ENCODE measurements at regions of chr4 and their contacts with region 1.

Region 1: GRCh38 chr4:155403886-155404285 is 27.1 kb upstream of the MAP9 start:
- DNase-seq: no peak
- ATAC-seq: peak in 1 of 2 donors; percentile 45

Region 2: GRCh38 chr4:155787113-155787710 is 383.3 kb after region 1 on chr4:
- intact Hi-C with region 1: loop called in 1 of 2 experiments (anchors 2 kb)
- DNase-seq: no peak
- ATAC-seq: peak; percentile 90 to 91

Region 3: GRCh38 chr4:155946486-155946885 is 542.6 kb after region 1 on chr4:
- intact Hi-C with region 1: loop called (anchors 5 to 10 kb)
- DNase-seq: no peak
- ATAC-seq: peak; percentile 57 to 77

Region 4: DNA sequence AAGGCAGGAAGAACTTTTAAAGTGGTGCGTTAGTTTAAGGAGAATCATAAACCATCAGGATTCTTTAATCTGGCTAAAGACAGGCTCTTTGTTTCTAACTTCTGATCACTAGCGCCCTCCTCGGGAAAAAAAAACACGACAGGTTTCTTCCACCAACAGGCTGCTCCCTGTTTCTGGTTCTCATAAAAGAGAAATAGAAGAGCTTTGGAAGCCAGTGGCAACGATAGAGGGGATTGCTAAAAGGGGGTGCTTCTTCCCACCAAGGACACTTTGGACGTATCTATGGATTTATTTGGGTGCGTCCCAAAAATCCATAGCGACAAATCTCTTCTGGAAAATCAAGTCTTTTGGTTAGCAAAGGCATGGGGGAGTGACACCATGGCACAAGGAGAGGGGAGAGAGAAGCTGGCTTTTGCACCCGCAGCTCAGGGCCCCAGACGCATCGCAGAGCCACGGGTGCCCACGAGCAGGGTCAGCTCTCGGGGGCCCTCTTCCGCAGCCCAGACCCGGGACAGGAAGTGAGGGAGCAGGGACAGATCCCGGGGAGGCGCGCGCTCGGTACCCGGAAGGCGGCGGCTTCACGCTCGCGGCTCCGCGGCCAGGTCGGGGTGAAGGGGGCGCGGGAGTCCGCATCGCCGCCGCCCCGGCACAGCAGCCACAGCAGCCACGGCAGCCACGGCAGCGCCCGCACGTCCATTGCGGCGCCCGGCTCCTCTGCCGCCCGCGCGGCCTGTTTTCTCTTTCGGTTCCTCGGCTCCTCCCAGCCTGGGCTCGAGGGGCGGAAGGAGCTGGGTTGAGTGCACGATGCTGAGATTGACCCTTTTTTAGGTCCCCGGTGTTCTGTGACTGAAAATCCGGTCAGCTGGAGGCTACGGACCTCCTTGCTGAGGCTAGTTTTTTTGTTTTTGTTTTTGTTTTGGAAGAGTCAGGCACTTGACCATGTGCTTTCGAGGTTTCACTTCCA is 549.5 kb after region 1 on chr4 and contains the start of gene CTSO:
- intact Hi-C with region 1: loop called (anchors 5 to 10 kb)
- DNase-seq: peak; percentile 83
- ATAC-seq: peak; percentile 97 to 98
- total RNA-seq, gene CTSO: 10.0 to 10.2 TPM

Measured in left cardiac atrium (tissue), 4 donors.